HCT116 (cell line): ENCODE measurements at regions of chr5 and their contacts with region 1.

Region 1: DNA sequence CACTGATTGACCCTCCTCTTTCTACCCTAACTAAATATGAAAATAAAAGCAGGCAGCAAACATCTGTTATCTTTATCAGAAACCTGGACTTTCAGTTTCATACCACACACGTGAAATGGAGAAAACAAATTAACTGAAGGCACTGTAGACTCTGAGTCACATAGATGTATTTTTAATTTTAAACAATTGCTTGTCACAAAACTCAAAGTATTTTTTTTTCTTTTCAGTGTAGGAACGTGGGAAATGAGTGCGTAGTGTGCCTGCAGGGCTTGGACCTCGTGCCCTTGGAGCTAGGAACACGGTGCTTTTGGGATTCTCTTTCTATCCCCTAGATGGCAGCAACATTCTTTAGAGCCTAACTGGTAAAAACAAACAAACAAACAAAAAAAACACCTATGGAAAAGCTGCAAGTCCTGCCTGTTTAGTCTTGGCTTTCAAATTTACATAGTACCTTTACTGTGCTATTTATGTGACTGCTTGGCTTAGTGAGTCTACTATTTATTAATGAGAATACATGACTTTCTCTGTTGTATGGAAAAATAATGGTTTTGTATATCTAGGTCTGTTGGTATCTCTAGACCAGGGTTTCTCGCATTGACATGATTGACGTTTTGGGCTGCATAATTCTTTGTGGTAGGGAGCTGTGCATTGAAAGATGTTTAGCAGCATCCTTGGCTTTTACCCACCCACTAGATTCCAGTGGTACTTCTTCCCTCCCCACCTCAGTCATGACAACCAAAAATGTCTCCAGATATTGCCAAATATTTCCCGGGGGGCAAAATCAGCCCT is 16.8 kb upstream of the ACTBL2 start:
- DNase-seq: peak; percentile 62
- ATAC-seq: peak; percentile 33
- H3K4me3 ChIP-seq: no peak overlapping the region
- H3K27ac ChIP-seq: no peak overlapping the region
- H3K4me1 ChIP-seq: peaks cover 22 to 43% of the 10 kb centered on the region in 2 experiments
- H3K27me3 ChIP-seq: no peaks in the 10 kb centered on the region
- CTCF ChIP-seq: peak; percentile 61 to 85 (median 63); a peak in 5 of 6 replicates
- POLR2A ChIP-seq: no peak
- RAD21 ChIP-seq: peak; percentile 93

Region 2: DNA sequence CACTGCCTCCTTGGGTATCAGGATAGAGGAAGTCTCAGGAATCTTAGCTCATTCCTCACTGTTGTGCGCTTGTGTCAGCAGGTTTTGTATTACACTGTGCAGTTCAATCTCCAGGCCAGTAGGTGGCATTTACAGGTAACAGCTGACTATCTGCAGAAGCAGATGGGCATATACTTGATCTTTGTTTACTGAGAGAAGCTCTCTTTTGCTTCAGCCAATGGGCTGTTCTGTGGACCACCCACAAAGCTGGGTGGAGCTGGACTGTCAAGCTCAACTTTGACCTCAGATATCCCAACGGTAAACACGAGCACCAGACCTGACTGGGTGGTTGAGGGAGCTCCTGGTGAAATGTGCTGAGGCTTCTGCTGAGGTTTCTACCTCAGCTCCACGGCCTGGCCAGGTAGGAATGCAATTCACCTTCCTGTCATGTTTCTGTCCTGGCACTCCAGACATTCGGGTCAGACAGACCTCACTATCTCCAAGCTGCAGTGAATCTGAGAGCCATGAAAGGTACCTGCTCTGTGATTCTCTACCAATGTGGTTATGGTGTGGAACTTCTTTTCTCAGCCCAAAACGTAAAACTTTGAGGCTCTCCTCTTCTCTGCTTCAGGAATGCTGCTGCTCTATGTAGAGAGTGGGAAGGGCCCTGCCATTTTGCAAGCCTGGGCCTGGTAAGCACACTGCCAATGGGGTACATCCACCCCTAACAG is 151.1 kb after region 1 on chr5:
- CTCF ChIA-PET with region 1: interaction called, 15 read pairs
- POLR2A ChIA-PET with region 1: interaction called, 3 read pairs
- RAD21 ChIA-PET with region 1: no interaction called
- intact Hi-C with region 1: no loop called
- DNase-seq: peak; percentile 57
- ATAC-seq: peak; percentile 97
- H3K4me3 ChIP-seq: no peak overlapping the region
- H3K27ac ChIP-seq: no peak overlapping the region
- H3K4me1 ChIP-seq: peaks cover 0 to 10% of the 10 kb centered on the region in 2 experiments; a peak in 2 of 4 replicates
- H3K27me3 ChIP-seq: no peaks in the 10 kb centered on the region
- CTCF ChIP-seq: peak; percentile 44 to 82 (median 81); a peak in 5 of 6 replicates
- POLR2A ChIP-seq: no peak
- RAD21 ChIP-seq: peak; percentile 80

Region 3: GRCh38 chr5:57764479-57765089 is 265.1 kb after region 1 on chr5:
- CTCF ChIA-PET with region 1: interaction called, 17 read pairs
- POLR2A ChIA-PET with region 1: no interaction called
- RAD21 ChIA-PET with region 1: no interaction called
- intact Hi-C with region 1: loop called (anchors 5 kb)
- DNase-seq: no peak
- ATAC-seq: no peak
- H3K4me3 ChIP-seq: no peak overlapping the region
- H3K27ac ChIP-seq: no peak overlapping the region
- H3K4me1 ChIP-seq: no peaks in the 10 kb centered on the region
- H3K27me3 ChIP-seq: no peaks in the 10 kb centered on the region
- CTCF ChIP-seq: no peak
- POLR2A ChIP-seq: no peak
- RAD21 ChIP-seq: no peak

Region 4: DNA sequence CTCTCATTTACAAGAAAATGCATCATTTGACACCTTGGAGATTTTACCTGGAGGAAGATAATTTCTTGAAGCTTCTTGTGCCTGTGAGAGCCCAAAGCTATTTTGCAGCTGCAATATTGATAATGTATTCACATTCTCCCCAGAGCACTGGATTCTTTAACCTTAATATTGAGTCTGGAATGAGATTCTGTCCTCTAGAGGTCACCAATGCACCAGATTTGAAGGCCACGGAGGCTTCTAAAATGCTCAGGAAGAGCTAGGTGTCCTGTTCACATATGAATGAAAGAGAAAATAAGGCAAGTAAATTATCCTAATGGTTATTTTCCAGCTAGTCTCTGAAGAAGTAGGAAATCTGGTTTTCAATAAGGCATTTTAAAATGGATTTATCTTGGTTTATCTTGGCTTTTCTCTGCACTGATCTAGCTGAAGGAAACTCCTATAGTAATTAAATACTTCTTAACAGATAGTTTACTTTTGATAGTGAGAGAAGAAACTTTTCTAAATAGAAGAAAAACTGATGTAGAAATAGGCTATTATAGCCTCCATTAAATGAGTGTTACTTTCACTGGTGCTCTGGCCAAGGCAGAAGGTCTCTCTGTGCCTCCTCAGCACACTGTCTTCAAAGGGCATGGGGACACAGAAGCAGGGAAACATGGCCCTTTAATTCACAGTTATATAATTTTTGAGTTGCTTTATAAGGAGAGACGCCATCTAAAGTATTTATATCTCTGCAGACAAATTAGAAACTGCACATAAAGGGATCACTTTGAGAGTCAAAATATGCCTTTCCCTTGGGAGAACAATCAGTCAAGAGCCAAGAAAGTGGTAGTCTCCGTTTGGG is 280.1 kb after region 1 on chr5:
- CTCF ChIA-PET with region 1: interaction called, 36 read pairs
- POLR2A ChIA-PET with region 1: interaction called, 4 read pairs
- RAD21 ChIA-PET with region 1: interaction called, 4 to 9 read pairs
- intact Hi-C with region 1: loop called (anchors 1 kb)
- DNase-seq: peak; percentile 63
- ATAC-seq: peak; percentile 94
- H3K4me3 ChIP-seq: no peak overlapping the region
- H3K27ac ChIP-seq: no peak overlapping the region
- H3K4me1 ChIP-seq: peaks cover 0 to 8% of the 10 kb centered on the region in 2 experiments; a peak in 1 of 4 replicates
- H3K27me3 ChIP-seq: no peaks in the 10 kb centered on the region
- CTCF ChIP-seq: peak; percentile 60 to 81 (median 78); a peak in 5 of 6 replicates
- POLR2A ChIP-seq: no peak
- RAD21 ChIP-seq: peak; percentile 92

Region 5: GRCh38 chr5:57887851-57888621 is 388.6 kb after region 1 on chr5:
- CTCF ChIA-PET with region 1: interaction called, 19 read pairs
- POLR2A ChIA-PET with region 1: no interaction called
- RAD21 ChIA-PET with region 1: interaction called in 1 of 2 experiments, 3 read pairs
- intact Hi-C with region 1: loop called (anchors 1 kb)
- DNase-seq: peak; percentile 61
- ATAC-seq: peak; percentile 88
- H3K4me3 ChIP-seq: no peak overlapping the region
- H3K27ac ChIP-seq: no peak overlapping the region
- H3K4me1 ChIP-seq: peaks cover 18 to 29% of the 10 kb centered on the region in 2 experiments
- H3K27me3 ChIP-seq: no peaks in the 10 kb centered on the region
- CTCF ChIP-seq: peak; percentile 59 to 75 (median 68); a peak in 5 of 6 replicates
- POLR2A ChIP-seq: no peak
- RAD21 ChIP-seq: peak; percentile 81